ENCODE measurements at regions of chr7 and their contacts with region 1.

Region 1: DNA sequence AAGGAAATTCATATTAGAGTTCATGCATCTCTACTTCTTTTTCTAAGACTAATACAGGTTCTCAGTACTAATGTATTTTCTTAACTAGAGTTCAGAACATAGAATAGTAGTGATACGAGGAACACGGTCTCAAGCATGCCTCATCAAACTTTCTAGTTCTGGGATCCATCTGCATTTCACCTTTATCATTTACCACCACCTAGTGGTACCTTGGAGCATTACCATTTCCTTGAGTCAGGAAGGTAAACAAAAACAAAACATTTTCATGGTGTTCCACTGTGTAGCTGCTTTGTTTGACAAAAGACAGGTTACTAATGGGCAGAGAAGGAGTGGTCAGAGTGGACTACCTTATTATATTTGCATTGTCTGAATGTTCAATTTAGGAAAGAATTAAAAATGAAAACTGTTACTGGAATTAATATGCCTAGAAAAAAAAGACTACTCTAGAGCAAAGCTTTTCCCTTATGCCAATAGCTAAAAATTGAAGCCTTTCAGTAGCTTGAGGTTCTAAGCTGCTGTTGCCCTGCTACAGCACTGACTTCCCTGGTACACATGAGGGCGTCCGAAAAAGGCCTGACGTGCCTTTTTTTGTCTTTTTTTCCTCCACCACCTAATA is 44.5 kb downstream of the STARD3NL start:
- DNase-seq: no peak
- H3K4me3 Mint-ChIP-seq: no peak overlapping the region
- H3K27ac Mint-ChIP-seq: peak overlapping the region; percentile 36
- H3K4me1 Mint-ChIP-seq: peaks cover 45% of the 10 kb centered on the region
- H3K27me3 Mint-ChIP-seq: no peaks in the 10 kb centered on the region

Region 2: GRCh38 chr7:38232502-38233366 is 10.1 kb after region 1 on chr7:
- CTCF ChIA-PET with region 1: interaction called, 42 read pairs
- POLR2A ChIA-PET with region 1: interaction called, 11 read pairs
- DNase-seq: peak; percentile 91
- H3K4me3 Mint-ChIP-seq: peak overlapping the region; percentile 50
- H3K27ac Mint-ChIP-seq: peak overlapping the region; percentile 94
- H3K4me1 Mint-ChIP-seq: peaks cover 75% of the 10 kb centered on the region
- H3K27me3 Mint-ChIP-seq: no peaks in the 10 kb centered on the region

Region 3: GRCh38 chr7:38318803-38319416 is 96.3 kb after region 1 on chr7:
- CTCF ChIA-PET with region 1: interaction called, 82 read pairs
- POLR2A ChIA-PET with region 1: interaction called, 3 read pairs
- DNase-seq: no peak
- H3K4me3 Mint-ChIP-seq: peak overlapping the region; percentile 64
- H3K27ac Mint-ChIP-seq: peak overlapping the region; percentile 81
- H3K4me1 Mint-ChIP-seq: peaks cover 41% of the 10 kb centered on the region
- H3K27me3 Mint-ChIP-seq: no peaks in the 10 kb centered on the region